ENCODE measurements at regions of chr9 and their contacts with region 1.

Region 1: GRCh38 chr9:69421908-69422801 is 97.1 kb downstream of the ENTREP1 start:
- DNase-seq: peak; percentile 71
- H3K4me3 Mint-ChIP-seq: no peak overlapping the region
- H3K27ac Mint-ChIP-seq: no peak overlapping the region
- H3K4me1 Mint-ChIP-seq: no peaks in the 10 kb centered on the region
- H3K27me3 Mint-ChIP-seq: peaks cover 26% of the 10 kb centered on the region
- CTCF ChIP-seq: peak; percentile 78

Region 2: DNA sequence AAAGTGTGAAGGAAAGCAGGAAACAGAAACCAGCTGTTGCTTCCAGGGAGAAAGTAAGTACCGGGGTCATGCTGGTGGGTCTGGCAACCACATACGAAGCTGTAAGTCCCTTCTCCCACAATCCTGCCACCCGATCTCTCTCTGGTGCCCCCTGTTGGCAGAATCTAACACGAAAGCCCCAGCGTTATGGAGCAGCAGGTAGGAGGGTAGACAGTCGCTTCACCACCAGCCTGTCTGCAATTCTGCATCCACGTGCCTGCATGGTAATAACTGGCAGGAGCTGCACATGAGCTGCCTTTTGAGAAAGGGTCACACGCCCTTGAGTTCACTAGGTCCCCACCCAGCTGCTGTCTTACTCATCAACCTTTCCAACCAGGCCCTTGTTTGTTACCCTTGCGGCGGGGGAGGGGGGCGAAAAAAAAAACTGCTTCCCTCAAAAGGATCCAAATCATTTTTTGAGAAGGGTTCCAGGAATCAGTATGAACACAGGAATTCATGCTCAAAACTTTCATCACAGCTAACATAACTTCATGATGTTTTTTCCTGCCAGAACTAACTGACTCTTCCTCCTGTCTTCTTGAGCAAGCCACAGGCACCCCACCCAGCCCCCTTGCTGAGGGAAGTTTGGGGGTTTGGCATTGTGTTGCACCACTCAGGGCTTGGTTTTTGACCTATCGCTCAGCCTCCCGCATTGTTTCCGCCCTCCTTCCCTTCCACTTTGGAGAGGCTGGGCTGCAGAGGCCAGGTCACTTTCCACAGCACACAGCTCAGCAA is 861.9 kb before region 1 on chr9:
- CTCF ChIA-PET with region 1: no interaction called
- POLR2A ChIA-PET with region 1: no interaction called
- intact Hi-C with region 1: no loop called
- DNase-seq: peak; percentile 50
- H3K4me3 Mint-ChIP-seq: no peak overlapping the region
- H3K27ac Mint-ChIP-seq: no peak overlapping the region
- H3K4me1 Mint-ChIP-seq: no peaks in the 10 kb centered on the region
- H3K27me3 Mint-ChIP-seq: peaks cover 17% of the 10 kb centered on the region
- CTCF ChIP-seq: peak; percentile 28

Region 3: GRCh38 chr9:69397384-69398214 is 24.6 kb before region 1 on chr9:
- CTCF ChIA-PET with region 1: interaction called, 28 read pairs
- POLR2A ChIA-PET with region 1: no interaction called
- intact Hi-C with region 1: no loop called
- DNase-seq: peak; percentile 49
- H3K4me3 Mint-ChIP-seq: no peak overlapping the region
- H3K27ac Mint-ChIP-seq: peak overlapping the region; percentile 19
- H3K4me1 Mint-ChIP-seq: peaks cover 7% of the 10 kb centered on the region
- H3K27me3 Mint-ChIP-seq: peaks cover 9% of the 10 kb centered on the region
- CTCF ChIP-seq: no peak

Region 4: DNA sequence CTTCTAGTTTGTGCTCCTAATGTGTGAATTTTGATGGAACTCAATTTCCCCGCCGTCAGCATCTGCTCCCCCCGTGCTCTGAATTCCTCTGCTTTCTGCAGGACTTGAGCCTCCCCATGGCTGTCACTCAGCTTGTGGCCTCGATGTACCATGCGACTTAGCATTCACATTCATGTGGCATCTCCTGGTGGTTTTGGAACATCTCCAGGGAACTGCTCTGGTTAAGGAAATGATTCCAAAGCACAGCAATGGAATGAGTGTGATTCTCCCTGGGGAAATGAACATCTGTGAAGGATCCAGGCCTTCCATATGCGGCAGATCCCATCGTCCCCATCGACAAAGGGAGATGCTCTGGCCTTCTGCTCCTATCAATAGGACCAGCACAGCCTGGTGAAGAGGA is 21.9 kb after region 1 on chr9:
- CTCF ChIA-PET with region 1: interaction called, 11 read pairs
- POLR2A ChIA-PET with region 1: no interaction called
- intact Hi-C with region 1: no loop called
- DNase-seq: no peak
- H3K4me3 Mint-ChIP-seq: no peak overlapping the region
- H3K27ac Mint-ChIP-seq: no peak overlapping the region
- H3K4me1 Mint-ChIP-seq: no peaks in the 10 kb centered on the region
- H3K27me3 Mint-ChIP-seq: peaks cover 33% of the 10 kb centered on the region
- CTCF ChIP-seq: no peak

Region 5: DNA sequence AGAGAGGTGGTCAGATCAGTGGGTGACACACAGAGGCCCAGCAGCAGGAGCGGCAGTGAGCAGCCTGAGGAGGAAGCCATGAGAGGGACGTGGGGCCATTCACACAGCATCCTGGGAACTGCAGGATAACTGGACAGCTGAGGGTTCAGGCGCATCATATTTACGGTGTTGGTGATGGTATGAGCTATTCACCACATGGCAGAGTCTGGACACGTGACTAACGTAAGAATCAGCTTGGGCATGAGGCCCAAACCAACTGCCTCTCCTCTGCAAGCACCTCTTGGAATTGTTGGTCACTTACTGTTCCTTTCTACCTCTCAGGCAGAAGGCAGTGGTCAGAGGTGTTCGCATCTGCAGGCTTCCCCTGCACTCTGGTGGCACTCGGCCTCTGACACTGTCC is 44.0 kb after region 1 on chr9:
- CTCF ChIA-PET with region 1: interaction called, 10 read pairs
- POLR2A ChIA-PET with region 1: no interaction called
- intact Hi-C with region 1: no loop called
- DNase-seq: no peak
- H3K4me3 Mint-ChIP-seq: no peak overlapping the region
- H3K27ac Mint-ChIP-seq: no peak overlapping the region
- H3K4me1 Mint-ChIP-seq: no peaks in the 10 kb centered on the region
- H3K27me3 Mint-ChIP-seq: no peaks in the 10 kb centered on the region
- CTCF ChIP-seq: no peak

Region 6: DNA sequence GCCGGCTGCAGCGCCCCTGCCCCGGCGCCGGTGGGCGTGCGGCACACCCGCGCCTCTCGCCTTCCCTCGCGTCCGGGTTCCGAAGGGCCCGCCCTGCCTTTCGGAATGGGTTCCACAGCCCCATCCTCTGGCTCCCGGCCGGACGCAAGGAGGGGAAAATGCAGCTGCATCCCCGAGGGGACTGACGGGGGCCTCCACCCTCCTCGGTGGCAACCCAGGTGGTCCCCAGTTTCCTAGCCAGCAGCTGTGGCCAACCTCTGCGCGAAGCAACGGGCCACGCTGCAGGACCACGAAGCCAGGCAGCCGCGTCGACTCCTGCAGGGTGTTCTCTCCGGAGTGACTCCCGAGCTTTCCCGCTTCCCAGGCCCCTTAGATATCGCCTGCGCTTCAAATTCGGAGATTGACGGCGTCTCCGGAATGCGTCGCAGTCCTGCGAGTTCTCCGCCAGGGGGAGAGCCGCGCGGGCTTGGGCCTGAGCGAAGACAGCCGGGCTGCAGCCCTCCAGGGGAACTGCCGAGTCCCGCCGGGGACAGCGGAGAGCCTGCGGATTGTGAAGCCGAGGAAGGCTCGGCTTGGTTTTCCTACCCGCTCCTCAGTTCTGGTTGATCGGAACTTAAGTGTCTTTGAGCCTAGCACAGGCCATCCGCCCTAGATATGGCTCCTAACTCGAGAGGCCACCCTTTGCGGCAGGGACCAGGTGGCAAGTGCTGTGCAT is 250.6 kb after region 1 on chr9:
- CTCF ChIA-PET with region 1: interaction called, 36 read pairs
- POLR2A ChIA-PET with region 1: no interaction called
- intact Hi-C with region 1: loop called (anchors 5 kb)
- DNase-seq: peak; percentile 84
- H3K4me3 Mint-ChIP-seq: peak overlapping the region; percentile 70
- H3K27ac Mint-ChIP-seq: no peak overlapping the region
- H3K4me1 Mint-ChIP-seq: peaks cover 6% of the 10 kb centered on the region
- H3K27me3 Mint-ChIP-seq: peaks cover 15% of the 10 kb centered on the region
- CTCF ChIP-seq: peak; percentile 82

Region 7: DNA sequence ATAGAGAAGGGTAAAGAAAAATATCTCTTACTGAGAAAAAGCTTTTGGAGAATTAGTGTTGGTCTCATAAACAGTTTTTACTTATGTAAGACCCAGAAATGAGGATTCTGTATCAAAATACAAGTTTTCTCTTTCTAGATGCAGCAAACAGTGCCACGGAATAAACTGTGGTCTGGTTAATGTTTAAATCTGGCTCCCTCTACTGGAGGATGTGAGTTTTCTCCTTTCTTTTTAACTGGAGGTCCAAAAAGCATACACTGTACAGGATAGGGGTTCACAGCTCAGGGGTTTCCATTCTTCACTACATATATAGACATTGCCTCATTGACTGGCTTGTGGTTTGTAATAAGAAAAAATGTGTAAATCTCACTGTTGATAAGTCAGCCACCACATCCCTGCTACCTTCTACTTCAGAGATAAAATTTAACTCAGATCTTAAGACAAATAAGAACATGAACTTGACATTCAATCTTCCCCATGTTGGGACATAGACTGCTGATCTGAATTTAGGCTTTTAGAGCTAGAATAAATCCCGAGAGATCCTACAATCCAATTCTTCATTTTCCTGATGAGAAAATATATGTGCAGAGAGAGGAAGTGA is 497.4 kb after region 1 on chr9:
- CTCF ChIA-PET with region 1: interaction called, 46 read pairs
- POLR2A ChIA-PET with region 1: no interaction called
- intact Hi-C with region 1: loop called (anchors 2 kb)
- DNase-seq: peak; percentile 66
- H3K4me3 Mint-ChIP-seq: no peak overlapping the region
- H3K27ac Mint-ChIP-seq: no peak overlapping the region
- H3K4me1 Mint-ChIP-seq: no peaks in the 10 kb centered on the region
- H3K27me3 Mint-ChIP-seq: peaks cover 27% of the 10 kb centered on the region
- CTCF ChIP-seq: peak; percentile 57